HCT116 (cell line): ENCODE measurements at regions of chr5 and their contacts with region 1.

Region 1: GRCh38 chr5:55982957-55983381 is 11.8 kb downstream of the IL6ST start:
- DNase-seq: no peak
- ATAC-seq: no peak
- H3K4me3 ChIP-seq: no peak overlapping the region
- H3K27ac ChIP-seq: no peak overlapping the region
- H3K4me1 ChIP-seq: peaks cover 0 to 8% of the 10 kb centered on the region in 2 experiments; a peak in 2 of 4 replicates
- H3K27me3 ChIP-seq: no peaks in the 10 kb centered on the region
- CTCF ChIP-seq: no peak
- POLR2A ChIP-seq: no peak
- RAD21 ChIP-seq: no peak

Region 2: GRCh38 chr5:56060271-56061110 is 77.5 kb after region 1 on chr5:
- CTCF ChIA-PET with region 1: no interaction called
- POLR2A ChIA-PET with region 1: no interaction called
- RAD21 ChIA-PET with region 1: no interaction called
- intact Hi-C with region 1: loop called (anchors 2 kb)
- DNase-seq: no peak
- ATAC-seq: no peak
- H3K4me3 ChIP-seq: no peak overlapping the region
- H3K27ac ChIP-seq: no peak overlapping the region
- H3K4me1 ChIP-seq: peaks cover 19 to 23% of the 10 kb centered on the region in 2 experiments
- H3K27me3 ChIP-seq: no peaks in the 10 kb centered on the region
- CTCF ChIP-seq: no peak
- POLR2A ChIP-seq: no peak
- RAD21 ChIP-seq: no peak